ENCODE measurements at regions of chr10 and their contacts with region 1.

Region 1: GRCh38 chr10:17652585-17652984 is 8.6 kb downstream of the STAM start:
- DNase-seq: no peak
- ATAC-seq: no peak
- H3K4me3 ChIP-seq: no peak overlapping the region
- H3K4me3 Mint-ChIP-seq: no peak overlapping the region
- H3K27ac ChIP-seq: no peak overlapping the region
- H3K27ac Mint-ChIP-seq: no peak overlapping the region
- H3K4me1 ChIP-seq: peaks cover 13% of the 10 kb centered on the region
- H3K4me1 Mint-ChIP-seq: peaks cover 81% of the 10 kb centered on the region
- H3K27me3 ChIP-seq: no peaks in the 10 kb centered on the region
- H3K27me3 Mint-ChIP-seq: no peaks in the 10 kb centered on the region
- CTCF ChIP-seq: no peak

Region 2: DNA sequence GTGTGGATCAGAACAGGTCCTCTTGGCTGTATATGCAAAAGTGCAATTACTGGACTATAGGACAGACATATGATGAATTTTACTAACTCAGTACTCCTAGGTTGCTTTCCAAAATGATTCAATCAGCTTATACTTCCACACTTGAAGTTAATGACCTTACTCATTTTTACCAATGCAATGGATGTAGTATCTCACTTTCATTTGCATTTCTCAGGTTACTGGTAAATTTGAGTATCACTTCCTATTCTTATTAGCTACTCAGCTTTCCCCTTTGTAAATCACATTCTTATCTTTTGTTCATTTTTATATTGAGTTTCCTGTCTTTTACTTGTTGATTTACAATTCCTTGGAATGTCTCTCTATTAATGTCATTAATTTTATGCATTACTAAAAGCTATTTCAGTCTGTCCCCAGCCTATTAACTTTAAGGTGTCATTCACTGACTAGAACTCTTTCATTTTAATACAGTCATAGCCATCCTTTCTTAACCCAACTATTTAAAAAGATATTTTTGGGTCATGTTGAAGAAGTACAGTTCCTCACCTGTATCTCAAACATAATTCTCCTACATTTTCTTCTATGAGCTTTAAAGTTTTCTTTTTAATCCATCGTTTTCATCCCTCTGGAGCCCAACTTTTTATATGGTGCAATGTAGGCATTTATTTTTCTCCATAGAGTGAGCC is 336.0 kb before region 1 on chr10:
- CTCF ChIA-PET with region 1: no interaction called
- POLR2A ChIA-PET with region 1: no interaction called
- intact Hi-C with region 1: no loop called
- DNase-seq: no peak
- ATAC-seq: no peak
- H3K4me3 ChIP-seq: no peak overlapping the region
- H3K4me3 Mint-ChIP-seq: no peak overlapping the region
- H3K27ac ChIP-seq: no peak overlapping the region
- H3K27ac Mint-ChIP-seq: no peak overlapping the region
- H3K4me1 ChIP-seq: no peaks in the 10 kb centered on the region
- H3K4me1 Mint-ChIP-seq: no peaks in the 10 kb centered on the region
- H3K27me3 ChIP-seq: no peaks in the 10 kb centered on the region
- H3K27me3 Mint-ChIP-seq: peaks cover 14% of the 10 kb centered on the region
- CTCF ChIP-seq: no peak

Region 3: DNA sequence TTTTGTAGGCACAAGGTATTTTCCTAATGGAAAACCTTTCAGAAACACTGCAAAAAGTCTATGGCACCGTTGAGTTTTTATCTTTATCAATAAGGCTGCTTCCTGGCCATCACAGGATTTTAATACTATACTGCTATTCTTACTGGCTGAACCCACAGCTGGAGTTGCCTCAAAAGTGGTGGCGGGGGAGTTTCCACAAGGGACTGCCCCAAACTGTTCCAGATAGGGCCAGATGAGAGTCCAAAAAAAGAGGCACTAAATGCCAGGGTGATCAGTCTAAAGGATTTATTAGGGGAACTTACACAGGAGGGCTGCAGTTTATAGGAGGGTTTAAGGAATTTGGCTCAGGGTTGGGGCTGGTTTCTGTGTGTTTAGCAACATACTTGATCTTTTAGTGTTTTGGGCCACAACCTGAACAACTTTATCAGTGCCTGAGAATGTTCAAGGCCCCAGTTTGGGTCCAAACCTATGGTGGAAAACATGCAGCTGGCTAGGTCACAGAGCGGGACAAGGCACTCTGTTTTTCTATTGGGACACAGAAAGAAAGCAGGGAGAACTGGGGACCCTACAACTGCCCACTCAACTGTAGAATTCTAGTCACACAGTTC is 32.8 kb after region 1 on chr10:
- CTCF ChIA-PET with region 1: no interaction called
- POLR2A ChIA-PET with region 1: no interaction called
- intact Hi-C with region 1: loop called (anchors 5 kb)
- DNase-seq: peak in 2 of 9 experiments; percentile 24 to 44
- ATAC-seq: no peak
- H3K4me3 ChIP-seq: no peak overlapping the region
- H3K4me3 Mint-ChIP-seq: no peak overlapping the region
- H3K27ac ChIP-seq: no peak overlapping the region
- H3K27ac Mint-ChIP-seq: peak overlapping the region; percentile 28
- H3K4me1 ChIP-seq: peaks cover 3% of the 10 kb centered on the region
- H3K4me1 Mint-ChIP-seq: peaks cover 39% of the 10 kb centered on the region
- H3K27me3 ChIP-seq: no peaks in the 10 kb centered on the region
- H3K27me3 Mint-ChIP-seq: no peaks in the 10 kb centered on the region
- CTCF ChIP-seq: no peak

Region 4: GRCh38 chr10:17698696-17699095 is 46.1 kb after region 1 on chr10:
- CTCF ChIA-PET with region 1: no interaction called
- POLR2A ChIA-PET with region 1: no interaction called
- intact Hi-C with region 1: loop called in 1 of 2 experiments (anchors 5 kb)
- DNase-seq: no peak
- ATAC-seq: no peak
- H3K4me3 ChIP-seq: no peak overlapping the region
- H3K4me3 Mint-ChIP-seq: no peak overlapping the region
- H3K27ac ChIP-seq: no peak overlapping the region
- H3K27ac Mint-ChIP-seq: no peak overlapping the region
- H3K4me1 ChIP-seq: no peaks in the 10 kb centered on the region
- H3K4me1 Mint-ChIP-seq: no peaks in the 10 kb centered on the region
- H3K27me3 ChIP-seq: no peaks in the 10 kb centered on the region
- H3K27me3 Mint-ChIP-seq: no peaks in the 10 kb centered on the region
- CTCF ChIP-seq: no peak

Region 5: DNA sequence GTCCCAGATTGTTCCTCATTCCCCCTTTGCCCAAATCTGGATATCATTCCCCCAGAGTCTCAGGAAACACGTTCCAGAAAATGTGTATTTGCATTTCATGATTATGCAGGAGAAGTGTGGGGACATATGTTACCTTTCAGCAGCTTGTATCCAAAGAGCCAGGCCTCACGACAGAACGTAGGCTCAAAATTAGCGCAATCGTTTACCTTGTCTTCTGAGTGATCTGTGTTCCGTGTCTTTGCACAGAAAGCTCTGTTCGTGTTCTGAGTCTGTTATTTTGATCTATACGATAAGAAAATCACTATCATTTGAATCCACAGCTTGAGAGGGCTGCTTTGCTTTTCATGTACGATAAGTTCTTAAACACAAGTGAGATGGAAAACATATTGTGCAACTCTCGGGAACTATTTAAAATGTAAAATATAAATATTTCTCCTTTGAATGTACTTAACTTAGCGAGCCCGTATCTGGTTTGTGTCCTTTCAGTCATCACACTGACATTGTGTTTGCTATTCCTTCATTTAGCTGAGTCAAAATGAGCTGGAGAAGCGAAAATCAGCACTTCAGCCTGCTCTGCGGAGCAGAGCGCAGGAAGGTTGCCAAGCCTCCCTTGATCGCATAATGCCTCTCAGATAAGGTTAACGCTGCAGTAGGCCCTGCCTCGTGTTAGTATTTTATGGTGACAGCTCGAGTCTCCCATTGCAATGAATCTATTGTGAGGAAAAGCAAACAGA is 407.4 kb after region 1 on chr10:
- CTCF ChIA-PET with region 1: no interaction called
- POLR2A ChIA-PET with region 1: no interaction called
- intact Hi-C with region 1: no loop called
- DNase-seq: no peak
- ATAC-seq: no peak
- H3K4me3 ChIP-seq: no peak overlapping the region
- H3K4me3 Mint-ChIP-seq: no peak overlapping the region
- H3K27ac ChIP-seq: no peak overlapping the region
- H3K27ac Mint-ChIP-seq: no peak overlapping the region
- H3K4me1 ChIP-seq: no peaks in the 10 kb centered on the region
- H3K4me1 Mint-ChIP-seq: no peaks in the 10 kb centered on the region
- H3K27me3 ChIP-seq: no peaks in the 10 kb centered on the region
- H3K27me3 Mint-ChIP-seq: no peaks in the 10 kb centered on the region
- CTCF ChIP-seq: no peak